Tibial artery (tissue), 4 donors: ENCODE measurements at regions of chr3 and their contacts with region 1.

Region 1: DNA sequence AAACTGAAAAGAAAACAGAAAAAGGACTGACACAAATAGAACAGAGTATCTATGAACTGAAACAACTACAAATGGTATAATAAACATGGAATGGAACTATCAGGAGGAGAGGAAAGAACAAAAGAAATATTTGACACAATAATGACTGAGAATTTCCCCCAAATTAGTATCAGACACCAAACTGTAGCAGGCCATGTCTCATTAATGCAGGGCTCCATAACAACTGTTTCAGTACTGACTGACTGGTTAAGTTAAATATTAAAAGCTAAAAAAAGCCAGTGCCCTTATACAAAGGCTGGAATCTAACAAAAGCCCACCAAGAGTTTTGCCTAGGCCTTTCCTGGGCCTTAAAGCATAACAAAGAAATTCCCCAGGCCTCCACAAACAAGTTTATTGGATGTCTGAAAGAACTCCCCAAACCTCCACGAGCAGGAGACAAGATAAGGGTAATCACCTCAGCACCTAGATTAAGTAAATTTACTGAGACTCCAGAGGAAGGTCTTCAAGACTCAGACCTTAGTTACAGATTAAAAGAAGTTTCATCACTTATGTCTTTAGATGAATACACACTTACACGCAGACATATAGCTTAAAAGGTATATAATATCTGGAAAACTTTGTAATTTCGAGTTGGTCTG is 45.7 kb downstream of the KPNA1 start:
- DNase-seq: no peak
- H3K4me3 ChIP-seq: no peak overlapping the region
- H3K27ac ChIP-seq: no peak overlapping the region
- H3K4me1 ChIP-seq: peaks cover 0 to 9% (median 2%) of the 10 kb centered on the region in 4 donors
- H3K27me3 ChIP-seq: no peaks in the 10 kb centered on the region
- CTCF ChIP-seq: no peak

Region 2: GRCh38 chr3:122258757-122259371 is 210.2 kb before region 1 on chr3:
- intact Hi-C with region 1: no loop called
- DNase-seq: peak; percentile 58 to 69
- H3K4me3 ChIP-seq: no peak overlapping the region
- H3K27ac ChIP-seq: no peak overlapping the region
- H3K4me1 ChIP-seq: no peaks in the 10 kb centered on the region
- H3K27me3 ChIP-seq: peaks cover 0 to 7% of the 10 kb centered on the region in 2 donors
- CTCF ChIP-seq: peak; percentile 26 to 33

Region 3: GRCh38 chr3:122514123-122515019 is 45.4 kb after region 1 on chr3 and contains the start of gene KPNA1:
- intact Hi-C with region 1: loop called (anchors 10 kb)
- DNase-seq: peak; percentile 89 to 91
- H3K4me3 ChIP-seq: peak within 1 kb of the TSS; percentile 89 to 95
- H3K27ac ChIP-seq: peak within 1 kb of the TSS; percentile 96 to 98
- H3K4me1 ChIP-seq: peaks cover 0 to 28% (median 13%) of the 10 kb centered on the region in 4 donors
- H3K27me3 ChIP-seq: no peaks in the 10 kb centered on the region
- CTCF ChIP-seq: no peak